ENCODE measurements at regions of chr6 and their contacts with region 1.

Region 1: GRCh38 chr6:131640100-131640499 is 3.0 kb downstream of the ENPP3 start:
- DNase-seq: no peak
- H3K4me3 ChIP-seq: no peak overlapping the region
- H3K4me3 Mint-ChIP-seq: no peak overlapping the region
- H3K27ac Mint-ChIP-seq: no peak overlapping the region
- H3K4me1 ChIP-seq: no peaks in the 10 kb centered on the region
- H3K4me1 Mint-ChIP-seq: no peaks in the 10 kb centered on the region
- H3K27me3 ChIP-seq: no peaks in the 10 kb centered on the region
- H3K27me3 Mint-ChIP-seq: peaks cover 4% of the 10 kb centered on the region
- CTCF ChIP-seq: no peak

Region 2: DNA sequence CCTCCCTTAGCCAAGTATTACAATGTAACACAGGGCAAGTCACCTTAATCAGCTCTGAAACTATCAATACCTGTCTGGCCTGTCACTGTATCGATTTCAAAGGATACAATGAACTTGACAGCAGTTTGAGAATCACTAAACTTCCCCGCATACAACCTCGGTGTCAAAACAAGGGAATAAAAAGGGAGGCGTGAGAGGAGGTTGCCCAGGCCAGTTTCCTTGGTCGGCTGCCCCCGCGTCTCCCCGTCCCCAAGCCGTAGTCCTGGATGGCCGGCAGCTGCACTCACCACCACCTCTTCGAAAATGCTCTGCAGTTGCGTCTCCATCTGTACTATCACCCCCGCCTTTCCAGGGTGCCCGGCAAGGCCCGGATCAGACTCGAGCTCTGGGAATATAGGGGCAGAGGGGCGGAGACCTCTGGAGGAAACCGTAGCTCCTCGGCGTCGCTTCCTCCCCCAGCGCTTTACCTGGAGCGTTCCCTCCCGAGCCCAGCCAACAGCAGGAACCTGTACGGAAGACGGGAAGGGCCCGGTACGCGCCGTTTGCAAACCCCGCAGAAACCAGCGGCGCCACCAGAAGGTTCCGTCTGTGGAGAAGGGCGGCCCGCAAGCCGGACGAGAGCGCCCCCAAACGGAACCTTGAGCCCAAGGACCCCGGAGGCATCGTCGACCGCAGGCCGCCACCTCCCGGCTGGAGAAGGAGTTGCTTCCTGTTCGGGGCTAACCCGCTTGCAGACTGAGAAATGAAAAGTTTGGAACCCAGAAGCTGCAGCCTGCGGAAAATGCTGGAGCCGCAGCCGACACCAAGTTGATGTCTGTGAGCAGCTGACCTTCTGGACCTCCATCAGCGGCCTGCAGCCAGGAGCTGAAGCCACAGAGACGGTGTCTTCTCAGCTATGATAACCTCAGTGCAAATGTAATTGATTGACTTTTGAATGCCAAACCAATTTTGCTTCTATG is 12.1 kb before region 1 on chr6 and contains the start of gene MED23:
- CTCF ChIA-PET with region 1: interaction called, 18 read pairs
- POLR2A ChIA-PET with region 1: no interaction called
- intact Hi-C with region 1: no loop called
- DNase-seq: peak; percentile 95 to 97
- H3K4me3 ChIP-seq: peak within 1 kb of the TSS; percentile 82
- H3K4me3 Mint-ChIP-seq: peak within 1 kb of the TSS; percentile 89
- H3K27ac Mint-ChIP-seq: peak within 1 kb of the TSS; percentile 84
- H3K4me1 ChIP-seq: 0 out of 2 replicates have a peak, but pooled peaks cover 5% of the 10 kb centered on the region
- H3K4me1 Mint-ChIP-seq: no peaks in the 10 kb centered on the region
- H3K27me3 ChIP-seq: no peaks in the 10 kb centered on the region
- H3K27me3 Mint-ChIP-seq: no peaks in the 10 kb centered on the region
- CTCF ChIP-seq: peak; percentile 98 to 100
- total RNA-seq, gene MED23: 19.1 and 22.4 TPM in 2 replicates

Measured in Caco-2 (cell line).